Activated naive CD4-positive, alpha-beta T cell treated with anti-CD3 and anti-CD28 coated beads for 36 hours (primary cell): ENCODE measurements at regions of chr2 and their contacts with region 1.

Region 1: DNA sequence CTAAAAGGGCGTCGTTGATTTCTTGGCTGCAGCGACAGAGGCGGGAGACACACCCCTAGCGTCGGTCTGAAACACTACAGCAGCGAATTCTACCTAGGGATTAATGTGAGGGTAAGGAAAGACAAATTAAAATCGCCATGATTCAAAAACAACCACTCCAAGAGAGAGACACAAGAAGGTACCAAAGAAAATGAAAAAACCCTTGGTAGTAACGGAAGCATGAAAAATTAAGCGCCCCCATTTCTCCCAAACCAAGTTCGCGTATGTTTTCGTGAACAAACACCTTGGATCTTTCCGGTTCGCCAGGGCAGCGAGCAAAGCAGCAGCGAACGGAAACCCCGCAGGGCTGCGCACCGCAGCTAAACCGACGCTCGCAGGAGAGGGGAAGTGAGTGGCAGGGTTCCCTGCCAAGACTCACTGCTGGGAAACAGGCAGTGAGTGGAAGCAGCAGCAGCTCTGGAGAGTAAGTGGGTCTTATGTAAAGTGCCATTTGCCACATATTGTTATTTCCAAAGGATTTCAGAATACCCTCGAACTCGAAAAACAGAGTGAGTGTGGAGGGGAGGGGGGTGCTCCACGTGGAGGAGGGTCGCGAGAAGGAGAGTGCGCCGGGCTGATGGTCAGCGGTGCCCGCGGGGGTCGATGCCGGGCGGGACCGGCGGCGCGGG is 1.0 kb downstream of the PPP3R1 start:
- DNase-seq: peak; percentile 90
- H3K4me3 Mint-ChIP-seq: peak overlapping the region; percentile 97
- H3K27ac Mint-ChIP-seq: peak overlapping the region; percentile 94
- H3K4me1 Mint-ChIP-seq: peaks cover 38% of the 10 kb centered on the region
- H3K27me3 Mint-ChIP-seq: no peaks in the 10 kb centered on the region

Region 2: DNA sequence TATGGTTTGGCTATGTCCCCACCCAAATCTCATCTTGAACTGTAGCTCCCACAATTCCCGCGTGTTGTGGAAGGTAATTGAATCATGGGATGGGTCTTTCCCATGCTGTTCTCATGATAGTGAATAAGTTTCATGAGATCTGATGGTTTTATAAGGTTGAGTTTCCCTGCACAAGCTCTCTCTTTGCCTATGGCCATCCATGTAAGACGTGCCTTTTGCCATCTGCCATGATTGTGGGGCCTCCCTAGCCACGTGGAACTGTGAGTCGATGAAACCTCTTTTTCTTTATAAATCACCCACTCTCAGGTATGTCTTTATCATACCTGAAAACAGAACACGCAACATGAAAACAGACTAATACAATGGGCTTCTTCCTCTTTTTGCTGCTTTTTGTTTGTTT is 177.3 kb before region 1 on chr2:
- CTCF ChIA-PET with region 1: no interaction called
- intact Hi-C with region 1: no loop called
- DNase-seq: no peak
- H3K4me3 Mint-ChIP-seq: no peak overlapping the region
- H3K27ac Mint-ChIP-seq: no peak overlapping the region
- H3K4me1 Mint-ChIP-seq: no peaks in the 10 kb centered on the region
- H3K27me3 Mint-ChIP-seq: no peaks in the 10 kb centered on the region

Region 3: DNA sequence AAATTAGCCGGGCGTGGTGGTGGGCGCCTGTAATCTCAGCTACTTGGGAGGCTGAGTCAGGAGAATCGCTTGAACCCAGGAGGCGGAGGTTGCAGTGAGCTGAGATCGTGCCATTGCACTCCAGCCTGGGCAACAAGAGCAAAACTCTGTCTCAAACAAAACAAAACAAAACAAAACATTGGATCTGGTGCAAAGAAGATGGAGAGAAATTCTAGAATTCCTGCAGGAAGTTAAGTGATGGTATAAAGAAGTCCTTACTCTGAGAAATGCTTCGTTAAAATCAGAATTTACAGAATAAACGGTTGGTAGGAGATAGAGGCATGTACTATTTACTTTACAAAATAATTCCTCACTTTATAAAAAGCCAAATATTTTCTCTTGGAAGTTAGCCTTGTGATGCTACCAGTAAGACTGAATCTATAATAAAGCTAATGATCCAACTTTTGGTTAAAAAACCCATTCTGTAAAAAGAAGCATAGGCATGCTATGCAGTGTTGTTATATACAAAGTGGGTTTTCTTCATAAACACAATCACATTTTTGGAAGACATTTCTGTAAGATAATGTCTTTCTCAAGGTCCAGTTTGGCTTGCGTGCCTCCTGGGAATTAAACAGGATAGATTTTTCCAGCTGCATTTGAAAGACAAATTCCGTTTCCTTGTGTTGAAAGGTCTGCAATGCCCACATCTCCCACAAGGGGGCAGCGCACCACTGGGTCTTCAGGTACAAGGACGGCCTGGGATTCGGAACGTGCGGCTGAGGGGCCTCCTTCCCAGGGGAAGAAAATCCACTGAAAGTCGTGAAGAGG is 129.2 kb before region 1 on chr2:
- CTCF ChIA-PET with region 1: interaction called, 6 read pairs
- intact Hi-C with region 1: loop called (anchors 1 kb)
- DNase-seq: peak; percentile 87
- H3K4me3 Mint-ChIP-seq: no peak overlapping the region
- H3K27ac Mint-ChIP-seq: no peak overlapping the region
- H3K4me1 Mint-ChIP-seq: peaks cover 2% of the 10 kb centered on the region
- H3K27me3 Mint-ChIP-seq: no peaks in the 10 kb centered on the region

Region 4: GRCh38 chr2:68203587-68203986 is 47.7 kb before region 1 on chr2:
- CTCF ChIA-PET with region 1: interaction called, 4 read pairs
- intact Hi-C with region 1: loop called (anchors 1 kb)
- DNase-seq: peak; percentile 16
- H3K4me3 Mint-ChIP-seq: peak overlapping the region; percentile 55
- H3K27ac Mint-ChIP-seq: peak overlapping the region; percentile 85
- H3K4me1 Mint-ChIP-seq: peaks cover 72% of the 10 kb centered on the region
- H3K27me3 Mint-ChIP-seq: no peaks in the 10 kb centered on the region

Region 5: DNA sequence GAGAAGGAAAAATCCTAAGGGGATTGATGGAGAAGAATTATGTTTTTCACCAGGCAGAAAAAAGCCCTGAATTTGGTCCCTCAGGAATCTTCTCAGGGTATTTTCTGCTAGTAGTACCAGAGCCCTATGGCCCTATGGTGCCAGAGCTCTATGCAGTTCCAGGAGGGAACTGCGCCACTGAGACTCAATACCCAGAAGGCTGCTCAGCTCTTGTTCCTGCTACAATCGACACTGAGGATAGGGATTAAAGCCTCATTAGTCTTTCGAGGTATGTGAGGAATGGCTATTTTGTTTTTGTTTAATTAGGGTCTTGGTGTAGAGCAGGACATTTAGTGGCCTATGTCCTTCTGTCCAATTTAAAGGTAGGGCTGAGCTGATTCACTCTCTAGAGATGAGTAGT is 22.7 kb after region 1 on chr2:
- CTCF ChIA-PET with region 1: no interaction called
- intact Hi-C with region 1: no loop called
- DNase-seq: no peak
- H3K4me3 Mint-ChIP-seq: no peak overlapping the region
- H3K27ac Mint-ChIP-seq: no peak overlapping the region
- H3K4me1 Mint-ChIP-seq: no peaks in the 10 kb centered on the region
- H3K27me3 Mint-ChIP-seq: peaks cover 2% of the 10 kb centered on the region

Region 6: DNA sequence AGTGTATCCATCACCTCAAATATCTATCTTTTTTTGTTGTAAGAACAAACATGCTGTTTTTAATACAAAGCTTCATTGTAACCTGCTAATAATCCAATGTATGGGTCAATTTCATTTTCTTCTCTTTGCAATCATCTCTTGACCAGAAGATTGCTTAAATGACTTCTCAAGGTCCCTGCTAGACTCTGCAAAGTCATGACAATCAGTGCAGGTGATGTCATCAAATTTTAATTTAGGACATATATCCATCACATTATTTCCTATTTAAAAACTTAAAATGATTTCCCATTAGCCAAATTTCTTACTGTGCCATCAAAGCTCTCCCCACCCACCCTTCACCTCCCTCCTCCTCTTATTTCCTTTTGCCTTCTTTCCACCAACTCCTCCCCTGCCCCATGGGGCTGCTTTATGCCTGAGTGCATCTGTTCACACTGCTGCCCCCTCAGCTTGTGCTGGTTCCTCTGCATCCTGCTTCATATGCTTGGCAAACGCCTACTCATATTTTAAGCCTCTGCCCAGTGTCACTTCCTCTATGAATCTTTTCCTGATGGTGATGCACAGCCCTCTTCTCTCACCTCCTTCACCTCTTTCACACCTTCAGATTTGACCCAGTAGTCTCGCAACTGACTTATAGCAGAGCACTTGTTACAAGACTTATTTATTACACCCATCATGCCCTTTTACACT is 134.0 kb after region 1 on chr2:
- CTCF ChIA-PET with region 1: interaction called, 3 read pairs
- intact Hi-C with region 1: loop called (anchors 1 kb)
- DNase-seq: peak; percentile 72
- H3K4me3 Mint-ChIP-seq: no peak overlapping the region
- H3K27ac Mint-ChIP-seq: peak overlapping the region; percentile 9
- H3K4me1 Mint-ChIP-seq: peaks cover 40% of the 10 kb centered on the region
- H3K27me3 Mint-ChIP-seq: peaks cover 5% of the 10 kb centered on the region

Region 7: DNA sequence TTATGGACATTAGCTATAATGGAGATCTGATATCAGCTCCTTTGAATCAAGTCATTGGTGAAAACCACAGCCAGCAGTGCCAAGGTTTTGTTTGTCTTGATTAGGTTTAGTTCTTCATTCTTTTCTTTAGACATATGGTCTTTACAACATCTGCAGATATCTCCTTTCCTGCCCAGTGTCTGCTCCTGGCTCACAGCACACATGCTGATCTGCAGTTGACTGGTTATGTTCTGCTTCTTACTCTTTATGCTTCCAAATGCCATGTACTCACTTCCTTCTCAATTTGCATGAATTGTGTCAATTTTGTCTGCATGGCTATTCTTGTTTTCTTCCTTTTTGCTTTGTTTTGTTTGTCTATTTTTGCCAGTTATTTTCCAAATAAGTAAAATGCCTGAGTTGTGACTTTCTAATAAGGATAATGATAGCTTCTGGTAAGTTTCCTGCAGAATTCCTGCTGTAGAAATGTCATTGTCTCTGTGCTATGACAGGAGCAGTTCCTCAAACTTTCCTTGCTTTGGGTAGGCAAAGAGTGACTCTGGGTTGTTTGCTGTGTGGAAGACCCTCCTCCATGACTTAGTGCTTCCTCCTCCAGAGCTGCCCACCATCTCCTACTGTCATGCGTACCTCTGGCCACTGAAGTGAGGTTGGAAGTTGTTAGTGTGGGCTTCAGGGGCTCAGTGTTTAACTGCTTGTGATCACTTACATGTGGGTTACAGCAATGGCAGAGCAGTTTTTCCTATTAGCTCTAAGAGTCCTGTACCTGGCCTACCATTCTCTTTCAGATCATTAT is 491.5 kb after region 1 on chr2:
- CTCF ChIA-PET with region 1: no interaction called
- intact Hi-C with region 1: loop called (anchors 2 kb)
- DNase-seq: peak; percentile 45
- H3K4me3 Mint-ChIP-seq: no peak overlapping the region
- H3K27ac Mint-ChIP-seq: peak overlapping the region; percentile 91
- H3K4me1 Mint-ChIP-seq: peaks cover 93% of the 10 kb centered on the region
- H3K27me3 Mint-ChIP-seq: no peaks in the 10 kb centered on the region

Region 8: GRCh38 chr2:68909793-68910674 is 658.7 kb after region 1 on chr2:
- CTCF ChIA-PET with region 1: no interaction called
- intact Hi-C with region 1: loop called (anchors 1 kb)
- DNase-seq: peak; percentile 92
- H3K4me3 Mint-ChIP-seq: no peak overlapping the region
- H3K27ac Mint-ChIP-seq: peak overlapping the region; percentile 68
- H3K4me1 Mint-ChIP-seq: peaks cover 34% of the 10 kb centered on the region
- H3K27me3 Mint-ChIP-seq: no peaks in the 10 kb centered on the region